AG04450 (cell line): ENCODE measurements at regions of chr18 and their contacts with region 1.

Region 1: GRCh38 chr18:11937874-11938478 is 29.9 kb upstream of the MPPE1 start:
- DNase-seq: no peak
- H3K4me3 ChIP-seq: no peak overlapping the region
- H3K27ac ChIP-seq: no peak overlapping the region
- H3K27me3 ChIP-seq: no peaks in the 10 kb centered on the region
- CTCF ChIP-seq: peak; percentile 83

Region 2: DNA sequence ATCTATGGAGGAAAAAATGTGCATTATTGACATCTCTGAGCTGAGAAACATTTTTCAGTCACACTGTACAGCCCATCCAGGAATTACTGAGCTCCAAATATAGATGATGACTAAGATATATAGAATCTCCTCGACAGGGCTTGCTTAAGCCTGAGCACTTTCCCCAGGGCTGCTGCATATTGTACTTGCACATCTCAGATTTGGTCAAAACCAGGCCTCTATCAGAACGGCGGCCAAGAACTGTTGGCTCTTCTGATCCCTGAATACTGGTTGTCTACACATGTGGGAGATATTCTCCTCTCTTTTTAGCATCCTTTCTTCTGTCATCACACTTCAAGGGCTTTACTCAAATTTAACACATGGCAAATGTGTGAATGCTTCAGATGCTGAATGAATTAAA is 530.0 kb before region 1 on chr18:
- CTCF ChIA-PET with region 1: no interaction called
- POLR2A ChIA-PET with region 1: no interaction called
- DNase-seq: no peak
- H3K4me3 ChIP-seq: no peak overlapping the region
- H3K27ac ChIP-seq: no peak overlapping the region
- H3K27me3 ChIP-seq: no peaks in the 10 kb centered on the region
- CTCF ChIP-seq: no peak

Region 3: DNA sequence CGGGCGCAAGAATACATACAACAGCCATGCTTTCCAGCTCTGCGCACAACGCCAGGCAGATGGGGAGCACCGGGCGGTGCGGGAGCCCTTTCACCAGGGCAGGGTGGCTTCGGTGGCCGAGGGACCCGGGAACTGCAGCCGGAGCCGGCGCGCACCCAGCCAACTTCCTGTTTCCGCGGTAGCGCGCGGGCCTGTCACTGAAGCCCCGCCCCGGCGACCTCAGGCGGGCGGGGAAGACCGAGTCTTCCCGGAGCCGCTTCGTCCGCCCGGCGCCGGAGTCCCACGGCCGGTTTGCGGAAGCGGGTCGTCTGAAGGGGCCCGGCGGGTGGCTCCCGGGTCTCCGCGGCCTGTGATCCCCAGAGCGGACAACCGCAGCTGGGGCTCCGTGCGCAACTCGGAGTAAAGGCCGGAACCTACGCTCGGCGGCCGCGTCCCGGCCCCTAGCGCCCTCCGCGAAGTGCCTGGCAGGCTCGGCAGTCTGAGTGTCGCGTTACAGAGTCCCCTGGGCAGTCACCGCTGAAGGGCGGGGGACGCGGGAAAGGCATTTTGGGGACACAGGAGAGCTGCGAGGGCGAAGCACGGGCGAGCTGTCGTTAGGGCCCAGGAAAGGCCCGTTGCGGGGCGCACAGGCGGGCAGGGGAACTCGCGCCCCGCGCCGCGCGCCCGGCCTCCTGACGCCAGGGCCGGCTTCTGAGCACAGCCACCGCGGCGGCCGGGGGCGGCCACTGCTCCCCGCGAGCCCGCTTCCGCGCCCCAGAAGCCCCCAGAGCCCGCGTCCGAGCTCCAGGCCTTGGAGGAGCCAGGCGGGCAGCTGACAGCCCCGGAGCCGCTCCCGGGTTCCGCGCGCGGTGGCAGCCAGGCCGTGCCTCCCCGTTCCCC is 29.6 kb before region 1 on chr18 and contains the start of gene MPPE1:
- CTCF ChIA-PET with region 1: interaction called, 12 read pairs
- POLR2A ChIA-PET with region 1: no interaction called
- DNase-seq: peak; percentile 43
- H3K4me3 ChIP-seq: peak within 1 kb of the TSS; percentile 79
- H3K27ac ChIP-seq: peak within 1 kb of the TSS; percentile 93
- H3K27me3 ChIP-seq: no peaks in the 10 kb centered on the region
- CTCF ChIP-seq: 0 out of 2 replicates have a peak, but pooled peaks have one; percentile 7
- polyA plus RNA-seq, gene MPPE1: 21.1 and 21.9 TPM in 2 replicates

Region 4: GRCh38 chr18:11963991-11964484 is 26.1 kb after region 1 on chr18:
- CTCF ChIA-PET with region 1: interaction called, 14 read pairs
- POLR2A ChIA-PET with region 1: interaction called, 3 read pairs
- DNase-seq: no peak
- H3K4me3 ChIP-seq: no peak overlapping the region
- H3K27ac ChIP-seq: peak overlapping the region; percentile 75
- H3K27me3 ChIP-seq: no peaks in the 10 kb centered on the region
- CTCF ChIP-seq: peak; percentile 44

Region 5: DNA sequence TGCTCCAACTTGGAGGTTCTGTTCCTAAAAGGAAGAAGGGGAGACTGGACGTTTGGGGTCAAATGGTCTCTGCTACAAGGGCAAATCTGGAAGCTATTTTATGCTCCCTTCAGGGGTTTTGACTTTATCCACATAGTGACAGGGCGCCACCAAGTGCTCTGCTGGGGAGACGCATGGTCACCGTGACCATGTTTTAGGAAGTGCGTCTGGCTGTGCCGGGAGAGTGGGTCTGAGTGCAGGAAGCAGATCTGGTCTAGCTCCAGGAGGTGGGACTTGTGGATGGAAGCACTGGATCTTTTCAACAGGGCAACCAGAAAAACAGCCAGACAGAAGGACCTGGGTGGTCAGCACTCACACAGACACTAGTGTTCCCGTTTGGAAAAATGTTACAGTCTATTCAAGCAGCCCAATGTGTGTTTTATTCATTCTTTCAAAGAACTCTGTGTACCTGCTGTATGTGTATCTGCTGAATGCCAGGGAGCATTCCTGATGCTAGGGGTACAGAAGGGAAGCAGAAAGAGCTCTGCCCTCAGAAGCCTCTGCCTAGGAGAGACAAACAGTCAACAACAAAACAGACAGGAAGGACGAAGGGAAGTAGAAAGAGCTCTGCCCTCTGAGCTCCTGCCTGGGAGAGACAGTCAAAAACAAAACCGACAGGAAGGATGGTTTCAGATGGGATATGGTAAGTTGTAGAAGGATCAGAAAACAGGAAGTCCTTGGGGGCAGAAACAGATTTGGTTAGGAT is 57.6 kb after region 1 on chr18:
- CTCF ChIA-PET with region 1: interaction called, 342 read pairs
- POLR2A ChIA-PET with region 1: interaction called, 3 read pairs
- DNase-seq: peak; percentile 48
- H3K4me3 ChIP-seq: no peak overlapping the region
- H3K27ac ChIP-seq: no peak overlapping the region
- H3K27me3 ChIP-seq: no peaks in the 10 kb centered on the region
- CTCF ChIP-seq: peak; percentile 75

Region 6: DNA sequence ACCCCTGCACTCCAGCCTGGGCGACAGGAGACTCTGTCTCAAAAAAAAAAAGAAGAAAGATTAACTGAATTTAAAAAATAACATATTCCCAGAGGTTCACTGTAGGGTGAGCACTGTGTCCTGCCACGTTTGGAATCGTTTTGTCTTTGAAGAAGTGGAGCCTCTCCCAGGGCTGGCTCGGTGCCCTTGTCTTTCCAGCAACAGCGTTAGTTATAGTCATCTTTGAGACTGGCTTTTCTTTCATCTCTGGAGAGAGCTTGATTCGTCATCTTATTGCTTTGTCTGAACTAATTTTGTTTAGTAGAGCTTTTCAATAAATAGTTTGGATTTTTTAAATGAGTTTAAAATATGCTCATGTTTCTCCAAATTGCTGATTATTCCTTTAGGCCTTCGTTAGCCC is 93.9 kb after region 1 on chr18:
- CTCF ChIA-PET with region 1: interaction called, 101 read pairs
- POLR2A ChIA-PET with region 1: no interaction called
- DNase-seq: peak; percentile 37
- H3K4me3 ChIP-seq: no peak overlapping the region
- H3K27ac ChIP-seq: no peak overlapping the region
- H3K27me3 ChIP-seq: no peaks in the 10 kb centered on the region
- CTCF ChIP-seq: no peak